Activated CD4-positive, alpha-beta memory T cell treated with anti-CD3 and anti-CD28 coated beads for 36 hours (primary cell): ENCODE measurements at regions of chr2 and their contacts with region 1.

Region 1: DNA sequence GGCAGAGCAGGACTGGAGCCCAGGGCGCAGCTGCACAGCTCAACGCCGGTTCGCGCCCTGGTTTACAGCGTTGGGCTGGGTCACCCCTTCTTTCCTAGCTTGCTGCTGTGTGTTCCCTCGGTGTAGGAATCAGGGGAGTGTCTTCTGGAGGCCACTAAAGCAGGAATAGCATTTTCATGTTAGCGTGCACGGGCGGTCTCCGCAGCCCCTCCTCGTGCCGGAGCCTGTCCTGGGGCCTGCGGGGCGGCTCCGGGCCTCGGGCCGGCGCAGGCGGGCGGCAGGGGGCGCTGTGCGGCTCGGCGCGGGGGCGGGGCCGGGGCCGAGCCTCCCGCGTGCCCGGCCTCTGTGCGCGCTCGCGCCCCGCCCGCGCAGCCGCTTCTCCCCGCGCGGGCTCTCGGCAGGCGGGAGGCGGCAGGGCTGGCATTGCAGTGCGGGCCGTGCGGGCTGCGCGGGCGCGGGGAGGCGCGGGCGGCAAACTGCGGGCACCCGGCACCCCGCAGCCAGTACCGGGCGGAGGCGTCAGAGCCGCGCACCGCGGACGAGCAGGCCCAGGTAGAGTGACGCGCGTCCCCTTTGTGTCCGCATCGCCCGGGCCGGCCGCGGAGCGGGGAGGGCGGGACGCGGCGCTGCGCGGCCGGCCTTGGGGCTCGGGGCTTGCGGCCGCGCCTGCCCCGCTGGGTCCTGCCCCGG is at the start of gene RNF144A:
- DNase-seq: peak; percentile 78
- H3K4me3 Mint-ChIP-seq: peak within 1 kb of the TSS; percentile 69
- H3K27ac Mint-ChIP-seq: peak within 1 kb of the TSS; percentile 67
- H3K4me1 Mint-ChIP-seq: peaks cover 66% of the 10 kb centered on the region
- H3K27me3 Mint-ChIP-seq: no peaks in the 10 kb centered on the region
- total RNA-seq, gene RNF144A: 21.4 to 22.7 TPM

Region 2: DNA sequence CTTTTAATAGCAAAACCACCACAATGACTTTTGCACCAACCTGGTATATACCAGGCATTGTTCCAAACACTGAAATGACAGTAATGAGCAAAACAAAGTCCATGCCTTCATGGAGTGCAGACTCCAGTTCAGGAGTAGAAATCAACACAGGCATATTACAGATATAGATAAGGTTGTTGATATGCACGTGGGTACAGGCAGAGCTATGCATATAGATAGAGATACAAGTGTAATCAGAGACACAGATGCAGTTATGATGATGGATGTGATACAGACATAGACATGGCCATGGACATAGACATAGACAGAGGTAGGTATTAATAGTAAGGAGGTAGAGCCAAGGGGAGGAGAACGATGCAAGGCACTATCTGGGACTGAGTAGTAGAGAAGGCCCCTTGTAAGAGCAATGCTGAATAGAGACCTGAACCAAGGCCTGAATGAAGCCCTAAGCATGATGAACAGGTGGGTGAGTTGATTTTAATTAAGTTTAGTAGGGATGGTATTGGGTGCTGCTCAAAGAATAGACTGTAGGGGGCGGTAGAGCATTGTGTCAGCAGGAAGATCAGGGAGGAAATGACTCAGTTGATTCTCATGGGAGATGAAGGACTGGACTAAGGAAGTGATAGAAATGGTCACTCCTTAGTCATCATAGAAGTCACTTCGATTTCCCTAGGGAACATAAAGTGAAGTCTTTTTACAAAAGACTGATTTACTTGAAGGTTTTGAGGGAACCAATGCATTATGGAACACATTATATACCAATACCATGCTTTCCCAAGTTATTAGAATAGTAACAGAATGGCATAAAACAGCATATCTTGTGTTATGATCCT is 90.9 kb before region 1 on chr2:
- CTCF ChIA-PET with region 1: interaction called, 3 read pairs
- POLR2A ChIA-PET with region 1: no interaction called
- intact Hi-C with region 1: loop called (anchors 5 kb)
- DNase-seq: peak; percentile 73
- H3K4me3 Mint-ChIP-seq: no peak overlapping the region
- H3K27ac Mint-ChIP-seq: no peak overlapping the region
- H3K4me1 Mint-ChIP-seq: peaks cover 7% of the 10 kb centered on the region
- H3K27me3 Mint-ChIP-seq: no peaks in the 10 kb centered on the region

Region 3: GRCh38 chr2:6877402-6878304 is 39.6 kb before region 1 on chr2 and contains the start of gene RSAD2:
- CTCF ChIA-PET with region 1: interaction called, 12 read pairs
- POLR2A ChIA-PET with region 1: no interaction called
- intact Hi-C with region 1: no loop called
- DNase-seq: peak; percentile 39
- H3K4me3 Mint-ChIP-seq: peak within 1 kb of the TSS; percentile 56
- H3K27ac Mint-ChIP-seq: peak within 1 kb of the TSS; percentile 15
- H3K4me1 Mint-ChIP-seq: peaks cover 52% of the 10 kb centered on the region
- H3K27me3 Mint-ChIP-seq: peaks cover 2% of the 10 kb centered on the region
- total RNA-seq, gene RSAD2: 7.9 to 8.6 TPM

Region 4: GRCh38 chr2:6929196-6929819 is 12.1 kb after region 1 on chr2:
- CTCF ChIA-PET with region 1: interaction called, 14 read pairs
- POLR2A ChIA-PET with region 1: interaction called, 6 read pairs
- intact Hi-C with region 1: no loop called
- DNase-seq: no peak
- H3K4me3 Mint-ChIP-seq: no peak overlapping the region
- H3K27ac Mint-ChIP-seq: no peak overlapping the region
- H3K4me1 Mint-ChIP-seq: peaks cover 46% of the 10 kb centered on the region
- H3K27me3 Mint-ChIP-seq: no peaks in the 10 kb centered on the region

Region 5: GRCh38 chr2:6999211-6999877 is 82.1 kb after region 1 on chr2:
- CTCF ChIA-PET with region 1: no interaction called
- POLR2A ChIA-PET with region 1: no interaction called
- intact Hi-C with region 1: no loop called
- DNase-seq: no peak
- H3K4me3 Mint-ChIP-seq: no peak overlapping the region
- H3K27ac Mint-ChIP-seq: no peak overlapping the region
- H3K4me1 Mint-ChIP-seq: peaks cover 3% of the 10 kb centered on the region
- H3K27me3 Mint-ChIP-seq: no peaks in the 10 kb centered on the region

Region 6: GRCh38 chr2:7014174-7014640 is 97.0 kb after region 1 on chr2:
- CTCF ChIA-PET with region 1: interaction called, 4 read pairs
- POLR2A ChIA-PET with region 1: interaction called, 4 read pairs
- intact Hi-C with region 1: loop called (anchors 5 kb)
- DNase-seq: peak; percentile 29
- H3K4me3 Mint-ChIP-seq: no peak overlapping the region
- H3K27ac Mint-ChIP-seq: no peak overlapping the region
- H3K4me1 Mint-ChIP-seq: peaks cover 36% of the 10 kb centered on the region
- H3K27me3 Mint-ChIP-seq: no peaks in the 10 kb centered on the region

Region 7: DNA sequence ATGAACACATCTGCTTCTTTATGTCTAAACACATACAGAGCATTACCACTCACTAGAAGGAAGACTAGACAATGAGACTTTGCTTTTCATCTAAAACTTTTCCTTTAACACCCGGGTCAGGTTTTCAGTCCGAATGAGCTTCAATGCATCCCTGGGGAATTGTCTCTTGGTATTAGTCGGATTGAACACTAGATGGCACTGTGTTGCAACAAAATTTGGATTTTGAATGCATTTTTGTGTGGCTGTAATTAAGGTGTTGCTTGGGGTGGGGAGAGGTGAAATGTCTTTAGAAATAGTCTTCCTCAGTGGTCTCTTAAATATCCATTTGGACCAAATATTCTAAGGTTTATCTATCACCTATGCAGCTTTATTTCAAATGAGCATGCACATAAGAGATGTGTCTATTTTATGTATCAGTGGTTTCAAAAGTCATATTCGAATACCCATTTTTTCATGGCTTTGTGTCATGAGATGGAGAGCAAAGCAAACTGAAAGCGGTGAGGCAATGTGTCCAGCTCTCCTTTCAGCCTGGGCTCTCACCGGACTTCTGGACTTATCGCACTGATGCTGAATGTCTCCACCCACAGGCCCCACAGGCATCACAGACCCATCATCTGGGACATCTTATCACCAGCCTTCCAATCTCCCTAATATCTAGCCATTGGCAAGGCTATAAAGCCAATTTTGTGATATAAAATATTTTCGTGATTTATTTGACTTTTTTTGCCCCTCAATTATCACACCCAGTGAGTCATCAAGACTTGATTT is 510.3 kb after region 1 on chr2:
- CTCF ChIA-PET with region 1: no interaction called
- POLR2A ChIA-PET with region 1: no interaction called
- intact Hi-C with region 1: loop called (anchors 10 kb)
- DNase-seq: no peak
- H3K4me3 Mint-ChIP-seq: peak overlapping the region; percentile 35
- H3K27ac Mint-ChIP-seq: peak overlapping the region; percentile 68
- H3K4me1 Mint-ChIP-seq: peaks cover 38% of the 10 kb centered on the region
- H3K27me3 Mint-ChIP-seq: peaks cover 14% of the 10 kb centered on the region

Region 8: GRCh38 chr2:8268172-8268783 is 1351.1 kb after region 1 on chr2:
- CTCF ChIA-PET with region 1: no interaction called
- POLR2A ChIA-PET with region 1: no interaction called
- intact Hi-C with region 1: no loop called
- DNase-seq: no peak
- H3K4me3 Mint-ChIP-seq: no peak overlapping the region
- H3K27ac Mint-ChIP-seq: no peak overlapping the region
- H3K4me1 Mint-ChIP-seq: no peaks in the 10 kb centered on the region
- H3K27me3 Mint-ChIP-seq: no peaks in the 10 kb centered on the region

Region 9: GRCh38 chr2:8514796-8515758 is 1597.9 kb after region 1 on chr2:
- CTCF ChIA-PET with region 1: no interaction called
- POLR2A ChIA-PET with region 1: no interaction called
- intact Hi-C with region 1: loop called (anchors 10 kb)
- DNase-seq: peak; percentile 82
- H3K4me3 Mint-ChIP-seq: peak overlapping the region; percentile 59
- H3K27ac Mint-ChIP-seq: peak overlapping the region; percentile 98
- H3K4me1 Mint-ChIP-seq: peaks cover 66% of the 10 kb centered on the region
- H3K27me3 Mint-ChIP-seq: no peaks in the 10 kb centered on the region